ENCODE measurements at regions of chr16 and their contacts with region 1.

Region 1: DNA sequence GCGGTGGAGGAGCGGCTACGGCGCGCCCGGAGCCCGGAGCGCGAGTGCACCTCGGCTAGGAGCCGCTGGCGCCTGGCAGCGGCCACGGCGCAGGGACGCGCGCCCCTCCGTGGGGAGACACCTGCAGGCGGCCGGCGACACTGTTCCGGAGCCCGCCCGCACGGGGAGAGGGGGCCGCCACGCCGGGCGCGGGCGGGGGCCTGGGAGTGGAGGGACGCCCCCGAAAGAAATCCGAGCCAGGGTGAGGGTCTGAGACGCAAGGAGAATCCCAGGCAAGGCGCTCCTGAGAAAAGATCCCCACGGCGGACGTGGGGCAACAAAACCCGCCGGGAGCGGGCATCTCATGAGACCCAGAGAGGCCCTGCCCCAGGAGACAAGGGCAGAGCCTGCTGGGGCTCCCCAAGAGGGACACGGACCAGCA is at the start of gene GSG1L:
- DNase-seq: peak; percentile 12
- H3K4me3 ChIP-seq: no peak within 1 kb of the TSS
- H3K27ac ChIP-seq: no peak within 1 kb of the TSS
- H3K4me1 ChIP-seq: peaks cover 4% of the 10 kb centered on the region; the same call in 1 of the 2 replicates
- H3K27me3 ChIP-seq: peaks cover 65% of the 10 kb centered on the region
- total RNA-seq, gene GSG1L: not detected in 2 replicates

Region 2: GRCh38 chr16:27639561-27640276 is 423.9 kb before region 1 on chr16:
- in situ Hi-C with region 1: loop called (anchors 25 kb)
- DNase-seq: peak; percentile 65
- H3K4me3 ChIP-seq: no peak overlapping the region
- H3K27ac ChIP-seq: no peak overlapping the region
- H3K4me1 ChIP-seq: no peaks in the 10 kb centered on the region
- H3K27me3 ChIP-seq: no peaks in the 10 kb centered on the region

Region 3: DNA sequence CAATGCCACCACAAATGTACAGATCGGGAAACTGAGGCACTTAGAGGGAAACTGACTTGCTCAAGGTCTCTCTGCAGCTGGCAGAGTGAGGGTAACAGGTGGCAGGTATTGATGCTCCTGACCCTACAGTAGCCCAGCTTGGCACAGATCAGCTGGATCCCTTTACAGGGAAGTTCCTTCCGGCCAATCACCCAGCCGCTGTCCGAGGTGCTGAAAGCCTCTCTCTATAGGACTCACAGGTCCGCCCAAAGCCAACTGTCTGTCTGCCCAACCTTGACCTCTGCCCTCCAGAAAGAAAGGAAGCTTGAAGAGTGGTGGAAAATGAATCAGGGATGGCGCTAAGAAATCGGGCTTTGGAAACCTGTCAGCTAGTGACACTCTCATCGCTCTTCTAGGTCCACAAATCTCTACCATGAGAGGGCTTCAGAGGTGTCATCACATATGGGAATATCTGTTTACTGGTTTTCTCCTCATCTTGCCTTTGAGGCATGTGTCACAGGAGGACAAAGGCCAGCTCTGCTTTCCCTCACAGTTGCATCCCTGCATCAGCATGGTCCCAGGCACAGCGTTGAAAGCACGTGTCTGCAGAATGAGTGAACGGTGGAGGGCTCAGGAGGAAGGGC is 267.5 kb before region 1 on chr16:
- in situ Hi-C with region 1: loop called (anchors 25 kb)
- DNase-seq: peak; percentile 55
- H3K4me3 ChIP-seq: no peak overlapping the region
- H3K27ac ChIP-seq: no peak overlapping the region
- H3K4me1 ChIP-seq: no peaks in the 10 kb centered on the region
- H3K27me3 ChIP-seq: peaks cover 17% of the 10 kb centered on the region

Region 4: DNA sequence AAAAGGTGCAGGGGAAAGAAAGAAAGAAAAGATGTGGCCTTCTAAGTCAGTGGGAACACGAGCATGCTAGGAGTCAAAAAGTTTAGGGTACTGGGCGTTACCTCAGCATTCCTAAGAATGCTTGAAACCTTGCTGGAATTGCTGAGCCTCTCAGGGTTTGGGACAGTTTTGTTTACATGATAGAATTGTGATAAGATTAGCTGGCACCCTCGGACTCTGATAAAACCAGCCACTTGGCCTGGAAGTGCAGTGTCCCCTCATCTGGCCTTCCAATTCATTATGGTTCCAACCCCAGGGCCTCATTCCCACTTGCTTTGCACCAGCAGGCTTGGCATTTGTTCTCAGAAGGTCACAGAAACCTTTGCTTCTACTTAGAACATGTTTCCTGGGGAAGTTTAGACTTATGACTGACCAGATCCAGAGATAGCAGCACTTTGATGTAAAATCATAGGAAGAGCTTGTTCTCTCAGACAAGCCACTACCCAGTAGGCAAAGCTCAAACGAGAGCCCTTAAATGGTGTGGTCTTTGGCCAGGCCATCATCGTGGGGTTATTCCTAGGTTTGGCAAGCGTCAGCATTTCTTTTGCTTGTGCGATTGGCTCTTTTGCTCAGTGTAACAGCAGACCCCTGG is 498.0 kb after region 1 on chr16:
- in situ Hi-C with region 1: no loop called
- DNase-seq: no peak
- H3K4me3 ChIP-seq: no peak overlapping the region
- H3K27ac ChIP-seq: no peak overlapping the region
- H3K4me1 ChIP-seq: no peaks in the 10 kb centered on the region
- H3K27me3 ChIP-seq: no peaks in the 10 kb centered on the region